Mammary epithelial cell (primary cell): ENCODE measurements at regions of chr10 and their contacts with region 1.

Region 1: GRCh38 chr10:45008524-45009161 is 7.9 kb downstream of the ZNF22 start:
- DNase-seq: peak; percentile 85
- H3K4me3 ChIP-seq: no peak overlapping the region
- H3K27ac ChIP-seq: no peak overlapping the region
- H3K4me1 ChIP-seq: no peaks in the 10 kb centered on the region
- H3K27me3 ChIP-seq: no peaks in the 10 kb centered on the region
- CTCF ChIP-seq: peak; percentile 69 to 77

Region 2: DNA sequence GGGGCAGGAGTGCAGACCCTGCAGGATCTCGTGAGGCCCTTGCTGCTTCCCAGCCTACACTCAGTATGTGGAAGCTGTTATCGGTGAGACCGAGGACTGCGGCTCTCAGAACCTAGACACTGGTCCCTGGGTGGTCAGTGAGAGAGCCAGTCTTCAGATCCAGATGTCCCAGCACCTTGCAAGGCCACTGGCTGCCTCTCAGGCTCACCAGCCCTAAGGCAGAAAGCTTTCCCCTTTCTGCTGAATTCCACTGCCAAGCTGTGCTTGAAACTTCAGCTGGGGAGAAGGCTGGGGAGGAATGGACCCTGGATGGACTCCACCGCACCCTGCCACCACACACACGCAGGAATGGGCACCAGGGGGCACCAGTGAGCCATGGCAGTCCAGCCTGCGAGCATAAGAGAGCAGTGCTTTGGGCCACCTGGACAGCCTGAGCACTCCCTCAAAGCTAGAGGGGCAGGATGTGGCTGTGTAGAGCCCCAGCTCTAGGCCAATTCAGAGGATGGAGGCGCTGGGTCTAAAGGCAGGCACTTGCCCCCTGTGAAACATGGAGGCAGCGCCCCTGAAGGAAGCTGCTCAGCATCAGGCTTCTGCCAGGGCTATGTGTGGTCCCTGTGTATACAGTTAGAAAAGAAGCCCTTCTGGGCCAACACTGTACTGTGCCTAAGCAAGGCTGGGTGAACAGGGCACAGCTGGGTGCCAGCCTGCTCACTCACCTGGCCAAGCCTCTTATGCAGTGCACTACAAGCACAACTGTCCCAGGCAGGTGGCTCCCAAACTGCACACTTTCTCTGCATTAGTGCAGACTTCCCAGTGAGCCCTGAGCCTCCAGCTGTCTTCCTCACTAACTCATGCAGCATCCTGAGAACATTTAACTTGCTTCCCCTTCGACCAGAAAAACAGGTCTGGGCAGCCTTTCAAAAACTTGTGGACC is 75.9 kb before region 1 on chr10:
- CTCF ChIA-PET with region 1: interaction called, 4 read pairs
- dilution Hi-C with region 1: no loop called
- in situ Hi-C with region 1: no loop called
- intact Hi-C with region 1: loop called (anchors 2 kb)
- DNase-seq: peak; percentile 67
- H3K4me3 ChIP-seq: no peak overlapping the region
- H3K27ac ChIP-seq: no peak overlapping the region
- H3K4me1 ChIP-seq: peaks cover 14% of the 10 kb centered on the region
- H3K27me3 ChIP-seq: no peaks in the 10 kb centered on the region
- CTCF ChIP-seq: peak; percentile 95 to 99

Region 3: DNA sequence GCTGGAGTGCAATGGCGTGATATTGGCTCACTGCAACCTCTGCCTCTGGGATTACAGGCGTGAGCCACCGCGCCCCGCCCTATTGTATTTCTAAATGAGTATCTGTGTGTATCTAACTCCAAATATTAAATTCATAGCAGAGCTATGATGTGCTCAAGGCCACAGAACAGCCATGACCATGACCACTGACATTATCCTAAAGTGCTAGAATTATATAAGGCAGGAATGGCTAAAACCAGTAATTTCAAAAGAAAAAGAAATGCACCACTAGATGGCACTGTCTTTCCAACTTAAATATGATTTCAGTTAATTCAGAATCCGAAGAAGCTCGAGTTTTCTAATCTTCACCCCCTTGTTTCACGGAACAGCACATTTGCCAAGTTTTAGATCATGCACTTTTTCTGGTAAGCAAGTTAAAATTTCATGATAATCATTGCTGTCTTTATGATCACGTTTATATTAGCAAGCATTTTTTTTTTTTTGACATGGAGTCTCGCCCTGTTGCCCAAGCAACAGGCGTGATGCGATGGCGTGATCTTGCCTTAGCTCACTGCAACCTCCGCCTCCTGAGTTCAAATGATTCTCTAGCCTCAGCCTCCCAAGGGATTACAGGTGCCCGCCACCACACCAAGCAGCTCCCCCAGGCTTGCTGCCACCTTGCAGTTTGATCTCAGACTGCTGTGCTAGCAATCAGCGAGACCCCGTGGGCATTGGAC is 241.5 kb after region 1 on chr10:
- CTCF ChIA-PET with region 1: no interaction called
- dilution Hi-C with region 1: no loop called
- in situ Hi-C with region 1: no loop called
- intact Hi-C with region 1: loop called (anchors 2 kb)
- DNase-seq: peak; percentile 58
- H3K4me3 ChIP-seq: no peak overlapping the region
- H3K27ac ChIP-seq: no peak overlapping the region
- H3K4me1 ChIP-seq: no peaks in the 10 kb centered on the region
- H3K27me3 ChIP-seq: no peaks in the 10 kb centered on the region
- CTCF ChIP-seq: peak; percentile 27 to 49

Region 4: DNA sequence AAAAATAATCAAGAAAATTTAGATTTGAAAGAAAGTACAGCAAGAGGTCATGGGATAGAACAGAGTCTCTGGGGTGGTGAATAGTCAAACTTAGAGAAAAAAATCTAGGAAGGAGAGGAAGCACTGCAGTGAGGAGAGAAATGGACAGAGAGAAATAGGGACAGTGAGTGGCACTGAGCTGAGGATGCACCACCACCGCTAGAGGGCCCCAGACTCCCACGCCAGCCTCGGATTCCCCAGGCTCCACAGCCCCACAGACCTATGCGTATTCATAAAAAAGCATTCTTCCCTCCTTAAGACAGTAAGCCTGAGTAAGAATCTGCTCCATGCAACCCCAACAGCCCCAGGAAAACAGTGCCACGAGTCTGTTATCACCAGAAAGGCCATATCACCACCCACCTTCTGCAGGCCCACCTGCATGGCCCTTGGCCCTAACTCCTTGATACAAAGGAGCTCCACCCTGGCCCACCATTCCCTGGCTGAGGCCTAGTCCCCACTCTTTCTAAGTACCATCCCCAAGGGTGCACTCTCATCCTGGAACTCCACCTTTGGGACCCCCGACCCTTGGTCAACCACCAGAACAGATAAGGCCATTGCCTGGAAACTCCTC is 456.4 kb after region 1 on chr10:
- CTCF ChIA-PET with region 1: no interaction called
- dilution Hi-C with region 1: no loop called
- in situ Hi-C with region 1: no loop called
- intact Hi-C with region 1: loop called (anchors 2 kb)
- DNase-seq: peak; percentile 47
- H3K4me3 ChIP-seq: no peak overlapping the region
- H3K27ac ChIP-seq: no peak overlapping the region
- H3K4me1 ChIP-seq: no peaks in the 10 kb centered on the region
- H3K27me3 ChIP-seq: no peaks in the 10 kb centered on the region
- CTCF ChIP-seq: peak; percentile 95 to 97